Activated B cell treated with CpG ODN at 0.5 μM for 24 hours (primary cell): ENCODE measurements at regions of chr17 and their contacts with region 1.

Region 1: DNA sequence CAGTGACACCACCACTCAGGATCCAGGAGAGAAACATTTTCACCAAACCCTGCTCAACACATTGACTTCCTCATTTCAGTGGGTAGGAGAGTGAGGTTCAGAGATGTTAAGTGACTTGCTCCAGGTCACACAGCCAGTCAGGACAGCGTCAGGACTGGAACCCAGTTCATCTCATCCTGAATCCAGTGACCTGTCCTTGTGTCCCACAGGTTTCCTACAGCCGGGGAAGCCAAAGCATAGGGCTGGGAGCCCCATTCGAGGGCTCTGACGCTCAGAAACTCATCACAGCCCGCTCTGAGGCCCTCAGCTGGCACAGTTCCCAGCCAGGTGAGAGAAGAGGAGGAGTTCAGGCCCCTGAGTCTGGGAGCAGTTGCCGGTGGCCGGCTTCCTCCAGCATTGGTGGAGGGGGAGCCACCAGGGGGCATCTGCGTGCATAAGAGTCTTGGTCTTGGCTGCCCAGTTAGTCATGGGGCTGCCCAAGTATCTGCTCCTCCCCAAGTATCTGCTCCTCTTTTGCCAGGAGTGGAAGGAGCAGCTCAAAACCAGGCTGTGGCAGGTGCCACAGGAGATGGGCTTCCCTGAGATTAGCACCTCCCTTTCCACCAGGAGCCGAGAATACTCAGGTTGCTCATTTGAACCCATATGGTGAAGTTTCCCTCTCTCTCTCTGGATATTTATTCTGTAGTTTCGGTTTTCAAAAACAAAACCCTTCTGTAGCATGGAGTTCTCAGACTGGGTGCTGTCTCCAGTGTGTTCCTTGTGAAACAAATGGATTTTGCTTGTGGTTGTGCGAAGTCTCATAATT is 56.0 kb downstream of the TNFRSF13B start:
- DNase-seq: peak; percentile 48
- ATAC-seq: peak; percentile 74
- H3K4me3 Mint-ChIP-seq: no peak overlapping the region
- H3K27ac Mint-ChIP-seq: no peak overlapping the region
- H3K4me1 Mint-ChIP-seq: peaks cover 22% of the 10 kb centered on the region
- H3K27me3 Mint-ChIP-seq: no peaks in the 10 kb centered on the region
- CTCF ChIP-seq: no peak

Region 2: GRCh38 chr17:17303010-17303846 is 387.3 kb after region 1 on chr17 and contains the start of gene NT5M:
- CTCF ChIA-PET with region 1: no interaction called
- POLR2A ChIA-PET with region 1: no interaction called
- intact Hi-C with region 1: loop called (anchors 10 kb)
- DNase-seq: peak; percentile 73
- ATAC-seq: peak; percentile 76
- H3K4me3 Mint-ChIP-seq: peak within 1 kb of the TSS; percentile 87
- H3K27ac Mint-ChIP-seq: peak within 1 kb of the TSS; percentile 61
- H3K4me1 Mint-ChIP-seq: peaks cover 34% of the 10 kb centered on the region
- H3K27me3 Mint-ChIP-seq: no peaks in the 10 kb centered on the region
- CTCF ChIP-seq: no peak
- total RNA-seq, gene NT5M: 0.71 and 0.93 TPM in 2 replicates